ENCODE measurements at regions of chr7 and their contacts with region 1.

Region 1: DNA sequence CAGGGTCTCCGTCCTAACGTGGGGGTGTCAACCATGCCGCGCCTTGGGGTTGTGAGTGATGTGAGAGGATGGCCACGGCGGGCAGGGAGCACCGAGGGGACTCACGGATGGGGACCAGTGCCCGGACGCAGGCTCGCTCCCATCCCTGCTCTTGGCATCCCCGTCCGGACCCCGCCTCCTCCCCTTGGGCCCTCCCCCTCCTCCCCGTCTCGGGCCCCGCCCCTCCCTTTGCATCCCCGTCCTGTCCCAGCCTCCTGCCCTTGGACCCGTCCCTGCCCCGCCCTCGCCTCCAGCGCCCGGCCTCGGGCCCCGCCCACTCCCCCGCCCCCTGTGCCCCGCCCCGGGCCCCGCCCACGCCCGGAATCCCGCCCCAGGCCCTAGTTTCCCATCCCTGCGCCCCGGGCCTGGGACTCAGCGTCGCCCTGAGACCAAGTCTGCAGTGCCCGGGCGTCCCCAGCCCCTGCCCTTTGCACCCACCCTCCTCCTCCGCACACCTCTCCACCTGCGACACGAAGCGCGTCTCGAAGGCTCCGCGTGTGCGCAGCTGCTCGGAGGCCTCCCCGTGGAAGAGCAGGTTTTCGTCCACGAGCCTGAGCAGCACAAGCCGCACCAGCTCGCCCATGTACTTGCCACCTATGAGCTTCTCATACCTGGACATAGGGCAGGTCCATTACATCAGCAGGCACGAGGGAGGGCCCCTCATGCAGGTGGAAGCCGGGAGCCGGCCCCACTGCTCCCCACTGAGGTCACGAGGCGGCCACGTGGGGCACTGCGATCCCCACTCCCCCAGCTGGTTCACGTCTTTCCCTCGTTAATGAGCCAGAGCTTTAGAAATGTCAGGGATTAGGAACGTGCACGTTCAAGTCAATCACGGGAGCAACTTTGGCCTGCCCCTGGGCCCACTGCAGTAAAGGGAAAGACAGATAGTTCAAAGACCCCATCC is 5.1 kb upstream of the MYL7 start:
- DNase-seq: peak; percentile 17 to 84 (median 62)
- ATAC-seq: peak; percentile 62
- H3K4me3 ChIP-seq: peak overlapping the region; percentile 60
- H3K4me3 Mint-ChIP-seq: peak overlapping the region; percentile 77
- H3K27ac ChIP-seq: no peak overlapping the region
- H3K27ac Mint-ChIP-seq: peak overlapping the region; percentile 79
- H3K4me1 ChIP-seq: peaks cover 20% of the 10 kb centered on the region
- H3K4me1 Mint-ChIP-seq: peaks cover 7% of the 10 kb centered on the region
- H3K27me3 ChIP-seq: peaks cover 0 to 8% of the 10 kb centered on the region in 2 experiments
- H3K27me3 Mint-ChIP-seq: no peaks in the 10 kb centered on the region
- CTCF ChIP-seq: no peak

Region 2: GRCh38 chr7:44200647-44201461 is 54.6 kb after region 1 on chr7 and contains the start of gene YKT6:
- CTCF ChIA-PET with region 1: interaction called, 3 read pairs
- POLR2A ChIA-PET with region 1: no interaction called
- intact Hi-C with region 1: loop called in 1 of 2 experiments (anchors 1 kb)
- DNase-seq: peak; percentile 89 to 97 (median 92)
- ATAC-seq: peak; percentile 98
- H3K4me3 ChIP-seq: peak within 1 kb of the TSS; percentile 89
- H3K4me3 Mint-ChIP-seq: peak within 1 kb of the TSS; percentile 83
- H3K27ac ChIP-seq: peak within 1 kb of the TSS in 1 of 2 donors; percentile 56
- H3K27ac Mint-ChIP-seq: peak within 1 kb of the TSS; percentile 62
- H3K4me1 ChIP-seq: peaks cover 15% of the 10 kb centered on the region
- H3K4me1 Mint-ChIP-seq: peaks cover 40% of the 10 kb centered on the region
- H3K27me3 ChIP-seq: peaks cover 0 to 7% of the 10 kb centered on the region in 2 experiments
- H3K27me3 Mint-ChIP-seq: peaks cover 13% of the 10 kb centered on the region
- CTCF ChIP-seq: peak; percentile 65
- total RNA-seq, gene YKT6: 85.0 to 86.4 TPM

Measured in CD4-positive, alpha-beta T cell (primary cell).